ENCODE measurements at regions of chr21 and their contacts with region 1.

Region 1: GRCh38 chr21:46312949-46313348 is 10.7 kb downstream of the C21orf58 start:
- DNase-seq: no peak

Region 2: DNA sequence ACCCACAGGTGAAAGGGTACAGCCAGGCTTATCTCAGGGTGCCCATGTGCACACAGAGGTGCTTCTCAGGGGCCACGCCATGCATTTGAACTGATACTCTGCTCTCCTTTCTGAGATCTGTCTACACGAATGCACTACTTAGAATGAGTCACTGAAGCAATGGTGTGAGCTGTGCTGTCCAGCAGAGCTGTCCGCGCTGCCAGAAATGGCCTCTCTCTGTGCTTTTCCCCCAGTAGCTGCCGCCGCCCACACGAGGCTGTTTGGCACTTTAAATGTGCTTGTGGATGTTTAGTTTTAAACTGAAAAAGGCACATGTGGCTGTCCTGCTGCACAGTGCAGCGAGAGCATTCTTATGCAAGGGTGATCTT is 418.5 kb before region 1 on chr21:
- CTCF ChIA-PET with region 1: no interaction called
- POLR2A ChIA-PET with region 1: no interaction called
- DNase-seq: no peak

Region 3: DNA sequence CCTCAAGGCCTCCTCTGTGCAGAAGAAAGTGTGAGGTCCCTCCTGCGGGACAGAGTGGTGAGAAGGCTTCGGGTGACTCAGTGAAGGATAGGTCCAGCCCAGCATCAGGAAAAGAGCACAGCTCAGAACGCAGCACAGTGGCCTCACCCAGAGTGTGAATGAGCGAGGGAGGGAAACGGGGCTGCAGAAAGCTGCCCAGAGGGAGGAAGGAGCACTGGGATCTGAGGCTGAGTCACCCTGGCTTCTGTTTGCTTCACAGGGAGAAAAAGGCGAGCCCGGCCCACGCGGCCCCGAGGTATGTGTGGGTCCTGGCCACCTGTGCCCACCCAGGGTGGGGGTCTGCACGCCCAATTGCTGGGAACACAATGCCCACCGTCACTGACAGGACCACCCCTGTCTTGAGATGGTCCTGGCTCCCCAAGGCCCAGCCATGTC is 190.7 kb before region 1 on chr21:
- CTCF ChIA-PET with region 1: no interaction called
- POLR2A ChIA-PET with region 1: no interaction called
- DNase-seq: no peak

Region 4: GRCh38 chr21:46253610-46254124 is 59.3 kb before region 1 on chr21:
- CTCF ChIA-PET with region 1: no interaction called
- POLR2A ChIA-PET with region 1: no interaction called
- DNase-seq: no peak

Region 5: GRCh38 chr21:46269444-46269843 is 43.5 kb before region 1 on chr21:
- CTCF ChIA-PET with region 1: no interaction called
- POLR2A ChIA-PET with region 1: no interaction called
- DNase-seq: no peak

Region 6: GRCh38 chr21:46323227-46324128 is 10.5 kb after region 1 on chr21 and contains the start of gene C21orf58:
- CTCF ChIA-PET with region 1: no interaction called
- POLR2A ChIA-PET with region 1: interaction called, 12 read pairs
- DNase-seq: peak; percentile 99